GM10248 (cell line): ENCODE measurements at regions of chr6 and their contacts with region 1.

Region 1: GRCh38 chr6:28355743-28356665 is 6.3 kb downstream of the ZKSCAN3 start:
- DNase-seq: peak; percentile 71
- CTCF ChIP-seq: peak; percentile 81

Region 2: DNA sequence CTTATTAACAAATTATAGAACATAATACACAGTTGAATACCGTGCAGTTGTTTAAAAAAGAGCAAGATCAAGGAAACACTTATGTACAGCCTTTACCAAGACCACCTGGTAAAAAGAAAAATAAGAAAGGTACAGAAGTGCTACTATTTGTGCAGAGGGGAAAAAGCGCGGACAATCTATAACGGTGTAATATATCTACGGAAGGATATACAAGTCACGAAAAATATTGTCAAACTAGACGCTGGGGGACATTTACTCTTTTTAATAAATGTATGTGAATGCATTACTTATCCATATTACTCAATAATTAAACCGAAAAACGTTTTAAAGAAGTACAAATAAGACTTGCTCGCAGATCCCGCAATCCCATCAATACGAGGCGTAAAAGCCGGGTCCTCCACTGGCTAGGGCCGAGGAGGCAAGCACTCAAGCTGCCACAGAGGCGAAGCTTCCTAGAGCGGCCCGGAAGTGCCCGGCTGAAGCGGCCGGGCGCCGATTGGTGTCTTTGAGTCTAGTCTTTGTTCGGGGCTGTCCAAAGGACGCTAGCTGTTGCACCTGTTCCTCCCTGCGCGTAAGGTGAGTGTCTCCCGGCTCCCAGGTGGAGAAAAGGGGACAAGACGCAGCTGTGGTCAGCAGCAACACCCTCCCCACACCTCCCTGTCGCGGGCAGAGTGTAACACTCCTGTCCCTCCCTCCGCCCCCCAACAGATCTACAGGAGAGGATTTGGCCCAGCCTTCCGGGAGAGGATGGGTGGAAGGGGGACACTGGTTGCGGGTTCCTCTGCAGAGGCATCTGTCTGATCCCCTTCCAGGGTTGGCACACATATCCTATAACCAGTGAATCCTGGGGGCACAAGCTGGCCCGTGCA is 231.7 kb before region 1 on chr6 and contains the start of gene ZSCAN16:
- CTCF ChIA-PET with region 1: interaction called, 14 read pairs
- POLR2A ChIA-PET with region 1: no interaction called
- DNase-seq: peak; percentile 81
- CTCF ChIP-seq: no peak

Region 3: GRCh38 chr6:28226460-28226859 is 129.5 kb before region 1 on chr6:
- CTCF ChIA-PET with region 1: interaction called, 11 read pairs
- POLR2A ChIA-PET with region 1: no interaction called
- DNase-seq: no peak
- CTCF ChIP-seq: no peak

Region 4: GRCh38 chr6:28266962-28267694 is 88.9 kb before region 1 on chr6 and contains the start of gene ZSCAN26:
- CTCF ChIA-PET with region 1: interaction called, 13 read pairs
- POLR2A ChIA-PET with region 1: no interaction called
- DNase-seq: peak; percentile 82
- CTCF ChIP-seq: no peak

Region 5: DNA sequence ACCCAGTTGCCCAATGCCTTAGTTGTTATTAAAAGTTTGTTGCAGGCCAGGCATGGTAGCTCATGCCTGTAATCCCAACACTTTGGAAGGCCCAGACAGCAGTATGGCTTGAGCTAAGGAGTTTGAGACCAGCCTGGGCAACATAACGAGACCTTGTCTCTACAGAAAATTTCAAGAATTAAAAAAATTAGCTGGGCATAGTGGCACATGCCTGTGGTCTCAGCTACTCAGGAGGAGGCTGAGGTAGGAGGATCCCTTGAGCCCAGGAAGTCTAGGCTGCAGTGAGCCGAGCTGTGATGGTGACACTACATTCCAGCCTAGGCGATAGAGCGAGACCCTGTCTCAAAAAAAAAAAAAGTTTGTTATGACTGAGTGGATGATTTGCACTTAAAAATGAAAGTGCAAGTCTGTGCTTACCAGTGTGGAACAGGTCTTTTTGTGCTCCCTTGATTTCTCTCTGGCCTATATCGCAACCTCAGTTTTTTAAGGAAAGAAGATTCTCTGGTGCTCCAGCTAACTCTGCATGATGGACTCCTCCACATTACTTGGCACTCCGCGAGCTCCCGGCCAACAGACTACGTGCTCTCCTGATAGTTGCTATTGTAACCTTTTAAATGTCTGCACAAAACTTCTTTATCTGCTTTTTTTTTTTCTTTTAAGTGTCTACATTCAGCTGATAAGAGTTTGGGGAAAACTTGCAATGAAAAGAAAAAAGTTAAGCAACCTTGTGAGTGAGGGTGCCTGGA is 15.9 kb after region 1 on chr6:
- CTCF ChIA-PET with region 1: interaction called, 29 read pairs
- POLR2A ChIA-PET with region 1: no interaction called
- DNase-seq: peak; percentile 52
- CTCF ChIP-seq: no peak

Region 6: DNA sequence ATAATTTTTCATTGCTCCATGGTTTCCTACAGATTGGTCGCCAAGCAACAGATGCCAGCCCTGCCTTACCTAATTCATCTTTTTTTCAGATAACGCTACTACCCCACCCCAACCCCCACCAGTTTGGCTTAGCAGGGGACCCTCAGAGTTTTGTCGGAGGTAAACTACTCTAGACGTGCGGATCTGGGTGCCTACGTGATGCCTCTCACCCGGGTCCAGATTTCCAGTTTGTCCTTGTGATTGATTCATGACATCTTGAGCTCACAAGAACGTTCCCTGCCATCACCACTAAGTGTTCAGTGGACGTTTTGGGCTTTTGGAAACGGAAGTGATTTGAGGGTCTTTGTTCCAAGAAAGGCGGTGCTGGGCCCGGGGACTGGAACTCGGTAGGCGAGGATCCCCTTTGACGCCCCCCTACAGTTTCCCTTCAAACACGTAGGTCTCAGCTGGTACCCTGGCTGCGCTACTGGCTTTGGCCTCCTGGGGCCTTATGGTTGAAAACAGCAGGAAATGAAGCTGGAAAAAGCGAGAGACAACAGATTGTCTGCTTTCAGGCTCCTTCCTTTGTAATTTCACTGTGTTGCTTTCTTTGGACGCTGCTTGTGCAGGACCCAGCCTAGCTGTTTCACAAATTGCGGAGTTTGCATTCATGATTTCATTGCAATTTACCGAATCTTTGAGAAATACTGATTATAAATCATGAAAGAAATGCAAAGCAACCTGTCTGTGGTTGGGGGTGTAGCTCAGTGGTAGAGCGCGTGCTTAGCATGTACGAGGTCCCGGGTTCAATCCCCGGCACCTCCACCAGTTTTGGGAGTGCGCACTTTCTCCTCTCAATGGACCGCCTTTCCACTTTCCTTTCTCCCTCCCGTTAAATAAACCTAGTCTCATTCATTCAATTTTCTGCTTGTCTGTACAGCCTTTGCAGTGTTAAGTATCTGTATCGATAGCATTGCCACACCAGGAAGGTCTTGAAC is 250.7 kb after region 1 on chr6:
- CTCF ChIA-PET with region 1: no interaction called
- POLR2A ChIA-PET with region 1: no interaction called
- DNase-seq: peak; percentile 51
- CTCF ChIP-seq: no peak

Region 7: GRCh38 chr6:29071831-29072723 is 716.1 kb after region 1 on chr6:
- CTCF ChIA-PET with region 1: no interaction called
- POLR2A ChIA-PET with region 1: no interaction called
- DNase-seq: peak; percentile 23
- CTCF ChIP-seq: peak; percentile 44